ENCODE measurements at regions of chr10 and their contacts with region 1.

Region 1: GRCh38 chr10:61847087-61847486 is 54.4 kb upstream of the ARID5B start:
- DNase-seq: no peak
- H3K4me3 ChIP-seq: no peak overlapping the region
- H3K27ac ChIP-seq: no peak overlapping the region
- H3K4me1 ChIP-seq: no peaks in the 10 kb centered on the region
- H3K27me3 ChIP-seq: no peaks in the 10 kb centered on the region
- CTCF ChIP-seq: no peak
- POLR2A ChIP-seq: no peak

Region 2: DNA sequence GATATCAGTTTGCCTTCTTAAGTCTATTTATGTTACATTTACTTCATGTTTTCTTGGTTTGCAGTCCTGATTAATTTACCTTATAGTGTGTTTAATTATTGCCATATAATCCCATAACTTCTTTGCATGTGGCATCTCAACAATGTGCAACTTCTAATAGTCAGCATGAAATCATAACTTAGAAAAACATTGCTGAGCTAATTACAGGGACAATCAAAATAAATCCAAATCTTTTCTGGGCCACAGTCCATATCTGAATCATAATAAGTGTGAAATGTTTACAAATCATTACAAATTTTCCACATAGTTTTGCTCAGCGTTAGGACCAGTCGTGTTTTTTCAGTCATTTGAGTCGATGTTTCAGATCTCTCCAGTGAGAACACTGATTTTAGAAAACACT is 213.4 kb before region 1 on chr10:
- intact Hi-C with region 1: loop called (anchors 5 kb)
- DNase-seq: no peak
- H3K4me3 ChIP-seq: no peak overlapping the region
- H3K27ac ChIP-seq: no peak overlapping the region
- H3K4me1 ChIP-seq: no peaks in the 10 kb centered on the region
- H3K27me3 ChIP-seq: no peaks in the 10 kb centered on the region
- CTCF ChIP-seq: no peak
- POLR2A ChIP-seq: no peak

Region 3: DNA sequence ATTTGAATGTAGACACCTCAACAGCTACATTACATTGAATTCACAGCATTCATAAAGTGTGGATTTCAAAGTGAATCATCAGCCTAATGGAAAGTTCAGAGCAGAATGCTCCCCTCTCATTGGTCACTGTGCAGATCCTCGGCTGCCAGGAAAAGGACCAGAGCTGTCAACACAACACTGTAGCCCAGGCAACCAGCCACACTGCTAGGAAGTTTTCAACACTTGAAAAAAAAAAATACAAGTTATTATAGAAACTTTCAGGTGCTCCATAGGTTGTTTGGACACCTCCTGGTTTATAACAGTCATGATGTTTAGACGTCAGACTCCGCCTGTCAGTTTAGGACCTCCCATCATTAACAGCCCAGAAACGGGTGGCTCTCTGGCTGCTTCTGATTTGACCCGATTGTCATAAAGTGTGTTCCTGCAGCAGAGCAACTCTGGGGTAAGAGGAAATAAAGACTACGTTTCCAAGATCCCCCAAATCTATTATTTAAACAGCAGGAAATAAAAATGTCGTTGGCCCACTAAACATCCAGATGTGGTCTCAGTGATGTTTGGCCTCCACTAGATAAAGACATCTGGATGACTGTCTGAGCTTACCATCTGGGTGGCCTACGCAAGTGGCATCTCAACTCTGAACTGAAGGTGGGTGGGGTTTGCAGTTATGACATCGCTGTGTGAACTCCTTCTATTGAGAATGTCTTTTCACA is 67.0 kb before region 1 on chr10:
- intact Hi-C with region 1: no loop called
- DNase-seq: no peak
- H3K4me3 ChIP-seq: no peak overlapping the region
- H3K27ac ChIP-seq: no peak overlapping the region
- H3K4me1 ChIP-seq: no peaks in the 10 kb centered on the region
- H3K27me3 ChIP-seq: no peaks in the 10 kb centered on the region
- CTCF ChIP-seq: no peak
- POLR2A ChIP-seq: no peak

Region 4: GRCh38 chr10:61804414-61804813 is 42.7 kb before region 1 on chr10:
- intact Hi-C with region 1: no loop called
- DNase-seq: no peak
- H3K4me3 ChIP-seq: no peak overlapping the region
- H3K27ac ChIP-seq: no peak overlapping the region
- H3K4me1 ChIP-seq: no peaks in the 10 kb centered on the region
- H3K27me3 ChIP-seq: no peaks in the 10 kb centered on the region
- CTCF ChIP-seq: no peak
- POLR2A ChIP-seq: no peak

Measured in breast epithelium (tissue), 4 donors.